SK-N-SH (cell line): ENCODE measurements at regions of chr15 and their contacts with region 1.

Region 1: DNA sequence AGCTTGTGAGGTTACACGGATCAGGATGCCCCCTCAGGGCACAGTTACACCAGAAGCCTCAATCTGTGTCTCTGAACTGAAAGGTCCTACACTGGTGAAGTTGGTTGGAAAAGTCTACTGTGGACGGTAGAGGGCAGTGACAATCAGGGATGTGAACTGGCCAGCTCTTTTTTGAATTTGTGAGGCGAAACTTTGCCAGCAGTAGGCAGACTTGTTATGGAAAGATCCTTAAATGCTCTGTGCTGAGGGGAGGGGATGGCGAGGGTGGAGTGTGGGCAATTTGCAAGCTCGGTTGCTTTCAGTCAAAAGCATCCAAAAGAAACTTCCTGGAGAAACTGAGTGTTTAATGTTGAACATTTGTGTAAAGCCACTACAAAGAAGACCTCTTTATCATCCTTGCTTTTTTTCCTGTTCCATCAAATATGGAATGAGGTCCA is 127.4 kb upstream of the ABHD17C start:
- DNase-seq: peak; percentile 80
- H3K4me3 ChIP-seq: no peak overlapping the region; a peak in 1 of 4 replicates
- H3K27ac ChIP-seq: 0 out of 4 replicates have a peak overlapping the region, but pooled peaks of 1 of the 2 experiments have one; percentile 7
- H3K4me1 ChIP-seq: peaks cover 0 to 4% of the 10 kb centered on the region in 2 experiments; a peak in 1 of 4 replicates
- H3K27me3 ChIP-seq: no peaks in the 10 kb centered on the region
- CTCF ChIP-seq: peak; percentile 87
- EP300 ChIP-seq: no peak
- RAD21 ChIP-seq: peak; percentile 97

Region 2: GRCh38 chr15:80455668-80456442 is 111.9 kb before region 1 on chr15:
- CTCF ChIA-PET with region 1: interaction called, 52 read pairs
- POLR2A ChIA-PET with region 1: no interaction called
- DNase-seq: peak; percentile 75
- H3K4me3 ChIP-seq: peak overlapping the region in 1 of 2 experiments; percentile 20; a peak in 1 of 4 replicates
- H3K27ac ChIP-seq: peak overlapping the region; percentile 49 to 69; a peak in 3 of 4 replicates
- H3K4me1 ChIP-seq: peaks cover 13 to 16% of the 10 kb centered on the region in 2 experiments; a peak in 3 of 4 replicates
- H3K27me3 ChIP-seq: no peaks in the 10 kb centered on the region
- CTCF ChIP-seq: peak; percentile 98
- EP300 ChIP-seq: peak; percentile 66 to 94
- RAD21 ChIP-seq: peak; percentile 96

Region 3: GRCh38 chr15:80580106-80580505 is 12.4 kb after region 1 on chr15:
- CTCF ChIA-PET with region 1: interaction called, 19 read pairs
- POLR2A ChIA-PET with region 1: no interaction called
- DNase-seq: no peak
- H3K4me3 ChIP-seq: no peak overlapping the region
- H3K27ac ChIP-seq: no peak overlapping the region
- H3K4me1 ChIP-seq: no peaks in the 10 kb centered on the region; a peak in 1 of 4 replicates
- H3K27me3 ChIP-seq: no peaks in the 10 kb centered on the region
- CTCF ChIP-seq: no peak
- EP300 ChIP-seq: no peak
- RAD21 ChIP-seq: no peak

Region 4: DNA sequence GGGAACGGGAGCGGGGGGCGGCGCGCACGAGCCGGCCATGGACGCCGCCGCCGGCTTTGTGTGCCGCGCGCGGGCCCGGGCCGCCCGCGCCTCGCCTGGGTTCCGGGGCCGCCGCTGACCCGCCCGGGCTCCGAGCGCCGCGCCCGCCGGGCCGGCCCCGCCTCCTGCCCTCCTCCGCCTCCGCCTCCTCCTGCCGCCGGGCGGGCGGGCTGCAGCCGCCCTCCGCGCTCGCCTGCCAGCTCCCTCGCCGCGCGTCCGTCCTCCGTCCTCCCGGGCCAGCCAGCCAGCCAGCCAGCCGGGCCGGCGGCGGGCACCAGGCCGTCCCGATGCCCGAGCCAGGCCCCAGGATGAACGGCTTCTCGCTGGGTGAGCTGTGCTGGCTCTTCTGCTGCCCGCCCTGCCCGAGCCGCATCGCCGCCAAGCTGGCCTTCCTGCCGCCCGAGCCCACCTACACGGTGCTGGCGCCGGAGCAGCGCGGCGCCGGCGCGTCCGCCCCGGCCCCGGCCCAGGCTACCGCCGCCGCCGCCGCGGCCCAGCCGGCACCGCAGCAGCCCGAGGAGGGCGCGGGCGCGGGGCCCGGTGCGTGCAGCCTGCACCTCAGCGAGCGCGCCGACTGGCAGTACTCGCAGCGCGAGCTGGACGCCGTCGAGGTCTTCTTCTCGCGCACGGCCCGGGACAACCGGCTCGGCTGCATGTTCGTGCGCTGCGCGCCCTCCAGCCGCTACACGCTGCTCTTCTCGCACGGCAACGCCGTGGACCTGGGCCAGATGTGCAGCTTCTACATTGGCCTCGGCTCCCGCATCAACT is 127.6 kb after region 1 on chr15 and contains the start of gene ABHD17C:
- CTCF ChIA-PET with region 1: interaction called, 28 read pairs
- POLR2A ChIA-PET with region 1: no interaction called
- DNase-seq: peak; percentile 92
- H3K4me3 ChIP-seq: peak within 1 kb of the TSS; percentile 73 to 76
- H3K27ac ChIP-seq: peak within 1 kb of the TSS; percentile 40 to 78
- H3K4me1 ChIP-seq: peaks cover 0 to 15% of the 10 kb centered on the region in 2 experiments; a peak in 2 of 4 replicates
- H3K27me3 ChIP-seq: no peaks in the 10 kb centered on the region
- CTCF ChIP-seq: no peak
- EP300 ChIP-seq: no peak
- RAD21 ChIP-seq: no peak
- polyA plus RNA-seq, gene ABHD17C: 9.2 and 11.7 TPM in 2 replicates

Region 5: DNA sequence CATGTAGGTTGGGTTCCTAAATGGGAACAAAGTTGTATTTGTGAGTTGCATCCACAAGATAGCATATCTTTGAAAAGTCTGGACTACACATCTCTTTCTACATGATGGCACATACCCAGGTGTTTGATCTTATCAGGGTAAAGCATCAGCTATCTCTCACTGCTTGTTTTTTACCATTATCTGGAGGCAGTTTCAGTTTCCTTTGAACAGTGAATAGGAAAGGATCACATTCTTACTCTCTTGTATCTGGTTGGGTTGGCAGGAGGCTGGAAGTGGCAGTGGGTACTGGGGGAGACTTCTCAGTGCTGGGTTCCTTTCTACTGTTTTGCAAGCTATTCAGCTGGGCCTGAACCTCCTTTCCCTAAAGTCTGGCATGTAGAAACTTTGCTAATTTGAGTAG is 215.5 kb after region 1 on chr15:
- CTCF ChIA-PET with region 1: interaction called, 253 read pairs
- POLR2A ChIA-PET with region 1: no interaction called
- DNase-seq: no peak
- H3K4me3 ChIP-seq: no peak overlapping the region
- H3K27ac ChIP-seq: no peak overlapping the region
- H3K4me1 ChIP-seq: peaks cover 0 to 19% of the 10 kb centered on the region in 2 experiments; a peak in 1 of 4 replicates
- H3K27me3 ChIP-seq: no peaks in the 10 kb centered on the region
- CTCF ChIP-seq: no peak
- EP300 ChIP-seq: no peak
- RAD21 ChIP-seq: no peak

Region 6: GRCh38 chr15:80970018-80970658 is 402.4 kb after region 1 on chr15:
- CTCF ChIA-PET with region 1: interaction called, 73 read pairs
- POLR2A ChIA-PET with region 1: no interaction called
- DNase-seq: peak; percentile 70
- H3K4me3 ChIP-seq: no peak overlapping the region; a peak in 1 of 4 replicates
- H3K27ac ChIP-seq: no peak overlapping the region
- H3K4me1 ChIP-seq: peaks cover 0 to 7% of the 10 kb centered on the region in 2 experiments; a peak in 1 of 4 replicates
- H3K27me3 ChIP-seq: no peaks in the 10 kb centered on the region
- CTCF ChIP-seq: peak; percentile 87
- EP300 ChIP-seq: no peak
- RAD21 ChIP-seq: peak; percentile 95